T-cell (primary cell): ENCODE measurements at regions of chr1 and their contacts with region 1.

Region 1: GRCh38 chr1:160768295-160768657 is 27.7 kb upstream of the LY9 start:
- DNase-seq: peak; percentile 65 to 93 (median 85)
- ATAC-seq: peak; percentile 93 to 96 (median 94)
- H3K4me3 ChIP-seq: peak overlapping the region; percentile 39 to 45
- H3K4me3 Mint-ChIP-seq: peak overlapping the region; percentile 74 to 83 (median 75)
- H3K27ac ChIP-seq: peak overlapping the region; percentile 90
- H3K27ac Mint-ChIP-seq: peak overlapping the region; percentile 96 to 98
- H3K4me1 ChIP-seq: peaks cover 12 to 17% of the 10 kb centered on the region in 2 experiments
- H3K4me1 Mint-ChIP-seq: peaks cover 21% of the 10 kb centered on the region in 3 donors
- H3K27me3 ChIP-seq: no peaks in the 10 kb centered on the region
- H3K27me3 Mint-ChIP-seq: no peaks in the 10 kb centered on the region

Region 2: DNA sequence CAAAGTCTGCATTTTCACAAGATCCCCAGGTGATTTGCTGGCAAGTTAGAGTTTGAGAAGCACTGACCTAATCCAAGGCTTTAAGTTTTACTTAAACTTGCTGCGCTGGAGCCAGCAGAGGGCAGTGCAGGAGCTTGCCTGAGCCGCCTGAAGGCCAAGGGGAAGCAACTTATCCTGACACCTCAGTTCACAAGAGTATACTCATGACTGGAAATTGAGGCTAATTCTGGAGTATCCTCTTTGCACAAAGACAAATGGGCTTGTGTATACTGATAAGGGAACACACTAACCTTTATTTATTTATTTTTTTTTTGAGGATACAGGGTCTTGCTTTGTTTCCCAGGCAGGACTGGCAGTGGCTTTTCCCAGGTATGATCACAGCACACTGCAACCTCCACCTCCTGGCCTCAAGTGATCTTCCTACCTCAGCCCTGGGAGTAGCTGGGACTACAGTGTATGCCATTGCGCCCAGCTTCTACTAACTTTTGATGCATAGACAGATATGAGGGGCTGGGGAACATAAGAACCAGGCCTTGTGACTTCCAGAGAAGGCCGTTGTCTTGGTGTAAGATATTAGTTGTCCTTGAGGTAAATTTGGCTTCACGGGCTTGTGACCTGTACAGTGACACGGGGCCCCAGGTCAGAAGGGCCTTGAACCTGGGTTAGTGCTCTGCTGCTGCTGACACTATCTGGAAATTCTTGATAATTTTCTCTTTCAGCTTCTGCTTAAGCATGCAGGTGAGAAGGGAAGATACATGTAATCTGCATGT is 92.5 kb before region 1 on chr1:
- CTCF ChIA-PET with region 1: interaction called, 31 to 89 read pairs
- POLR2A ChIA-PET with region 1: no interaction called
- DNase-seq: peak; percentile 46 to 84 (median 69)
- ATAC-seq: peak; percentile 77 to 84 (median 80)
- H3K4me3 ChIP-seq: no peak overlapping the region
- H3K4me3 Mint-ChIP-seq: peak overlapping the region in 1 of 3 donors; percentile 1
- H3K27ac ChIP-seq: peak overlapping the region; percentile 58
- H3K27ac Mint-ChIP-seq: peak overlapping the region; percentile 78 to 85
- H3K4me1 ChIP-seq: peaks cover 24 to 33% of the 10 kb centered on the region in 2 experiments
- H3K4me1 Mint-ChIP-seq: peaks cover 9 to 18% (median 10%) of the 10 kb centered on the region in 3 donors
- H3K27me3 ChIP-seq: no peaks in the 10 kb centered on the region
- H3K27me3 Mint-ChIP-seq: no peaks in the 10 kb centered on the region

Region 3: DNA sequence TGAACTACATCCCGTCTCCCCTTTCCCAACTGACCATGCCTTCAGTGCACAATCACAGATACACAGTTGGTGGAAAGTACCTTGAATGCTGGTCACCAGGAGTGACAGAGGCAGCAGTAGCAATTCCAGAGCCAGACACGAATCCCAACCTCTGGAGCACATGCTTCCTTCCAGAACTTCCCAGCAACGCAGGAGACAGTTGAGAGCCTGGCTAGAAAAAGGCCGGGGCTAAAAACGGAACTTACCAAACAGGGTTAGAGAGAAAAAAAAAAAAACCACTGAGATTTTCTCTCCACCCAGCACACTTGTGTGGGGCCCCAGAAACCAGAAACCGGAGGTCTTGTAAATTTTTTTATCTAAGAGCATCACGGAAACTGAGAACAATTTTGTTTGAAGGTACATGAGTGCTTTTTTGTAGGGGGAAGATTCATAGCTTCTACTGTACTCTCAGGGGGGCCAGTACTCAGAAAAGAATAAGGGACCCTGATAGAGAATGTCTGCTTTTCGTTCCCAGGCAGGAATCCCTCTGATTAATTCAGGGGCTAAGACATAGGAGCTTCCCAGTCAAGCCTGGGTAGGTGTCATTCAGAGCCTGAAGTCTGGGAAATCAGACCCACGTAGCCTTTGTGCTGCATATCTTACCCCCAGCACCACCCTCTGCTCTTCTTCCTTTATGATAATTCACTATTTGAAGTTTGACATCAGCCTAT is 56.5 kb before region 1 on chr1 and contains the start of gene CD48:
- CTCF ChIA-PET with region 1: interaction called, 4 to 36 read pairs
- POLR2A ChIA-PET with region 1: interaction called in 1 of 2 experiments, 3 read pairs
- DNase-seq: peak in 34 of 35 experiments; percentile 24 to 79 (median 48)
- ATAC-seq: peak; percentile 54 to 77 (median 60)
- H3K4me3 ChIP-seq: peak within 1 kb of the TSS; percentile 78 to 94
- H3K4me3 Mint-ChIP-seq: no peak within 1 kb of the TSS
- H3K27ac ChIP-seq: peak within 1 kb of the TSS; percentile 95
- H3K27ac Mint-ChIP-seq: no peak within 1 kb of the TSS
- H3K4me1 ChIP-seq: peaks cover 50 to 51% of the 10 kb centered on the region in 2 experiments
- H3K4me1 Mint-ChIP-seq: peaks cover 39 to 50% (median 47%) of the 10 kb centered on the region in 3 donors
- H3K27me3 ChIP-seq: no peaks in the 10 kb centered on the region
- H3K27me3 Mint-ChIP-seq: no peaks in the 10 kb centered on the region
- total RNA-seq, gene CD48: 249 to 393 (median 273) TPM

Region 4: DNA sequence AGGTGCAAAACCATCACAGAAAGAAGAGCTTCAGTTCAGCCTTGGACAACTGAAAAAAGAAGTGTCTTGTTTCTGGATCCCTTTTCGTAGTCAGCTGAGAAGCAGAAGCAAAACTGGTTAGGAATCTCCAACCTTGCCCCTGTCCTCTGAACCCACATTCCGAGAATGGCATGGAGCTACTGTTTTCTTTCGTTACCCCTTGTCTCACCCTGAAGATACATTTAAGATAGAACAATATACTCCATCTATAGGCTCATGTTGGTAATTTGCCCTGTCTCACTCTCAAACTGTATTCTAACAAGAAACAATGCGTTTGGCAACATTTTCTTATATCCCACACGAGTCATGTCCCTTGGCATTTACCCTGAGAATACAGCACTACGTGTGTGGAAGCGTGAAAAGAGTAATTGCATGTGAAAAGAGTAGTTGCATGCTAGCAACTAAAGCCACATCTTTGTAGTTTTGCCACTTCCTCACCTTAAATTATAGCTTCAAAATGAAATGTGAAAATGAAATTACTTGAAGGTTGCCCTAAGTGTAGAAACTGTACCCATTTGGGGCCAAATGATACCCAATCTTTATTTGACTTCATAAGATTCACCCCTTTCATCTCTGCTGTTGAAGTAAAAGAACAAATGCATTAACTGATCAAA is 24.0 kb before region 1 on chr1:
- CTCF ChIA-PET with region 1: interaction called in 1 of 2 experiments, 15 read pairs
- POLR2A ChIA-PET with region 1: no interaction called
- DNase-seq: peak in 4 of 35 experiments; percentile 11 to 64 (median 24)
- ATAC-seq: peak; percentile 67 to 84 (median 80)
- H3K4me3 ChIP-seq: peak overlapping the region in 1 of 2 donors; percentile 40
- H3K4me3 Mint-ChIP-seq: peak overlapping the region; percentile 59 to 72 (median 59)
- H3K27ac ChIP-seq: peak overlapping the region; percentile 76
- H3K27ac Mint-ChIP-seq: peak overlapping the region; percentile 90 to 93
- H3K4me1 ChIP-seq: peaks cover 11 to 46% of the 10 kb centered on the region in 2 experiments
- H3K4me1 Mint-ChIP-seq: peaks cover 65 to 75% (median 73%) of the 10 kb centered on the region in 3 donors
- H3K27me3 ChIP-seq: no peaks in the 10 kb centered on the region
- H3K27me3 Mint-ChIP-seq: no peaks in the 10 kb centered on the region

Region 5: GRCh38 chr1:160795951-160796383 is 27.7 kb after region 1 on chr1 and contains the start of gene LY9:
- CTCF ChIA-PET with region 1: interaction called, 10 to 19 read pairs
- POLR2A ChIA-PET with region 1: no interaction called
- DNase-seq: peak; percentile 45 to 95 (median 84)
- ATAC-seq: peak; percentile 86 to 90 (median 87)
- H3K4me3 ChIP-seq: peak within 1 kb of the TSS; percentile 72 to 92
- H3K4me3 Mint-ChIP-seq: peak within 1 kb of the TSS; percentile 93 to 99 (median 98)
- H3K27ac ChIP-seq: peak within 1 kb of the TSS; percentile 93
- H3K27ac Mint-ChIP-seq: peak within 1 kb of the TSS; percentile 99
- H3K4me1 ChIP-seq: peaks cover 33 to 37% of the 10 kb centered on the region in 2 experiments
- H3K4me1 Mint-ChIP-seq: peaks cover 45 to 66% (median 61%) of the 10 kb centered on the region in 3 donors
- H3K27me3 ChIP-seq: no peaks in the 10 kb centered on the region
- H3K27me3 Mint-ChIP-seq: no peaks in the 10 kb centered on the region
- total RNA-seq, gene LY9: 95.4 to 127 (median 101) TPM

Region 6: DNA sequence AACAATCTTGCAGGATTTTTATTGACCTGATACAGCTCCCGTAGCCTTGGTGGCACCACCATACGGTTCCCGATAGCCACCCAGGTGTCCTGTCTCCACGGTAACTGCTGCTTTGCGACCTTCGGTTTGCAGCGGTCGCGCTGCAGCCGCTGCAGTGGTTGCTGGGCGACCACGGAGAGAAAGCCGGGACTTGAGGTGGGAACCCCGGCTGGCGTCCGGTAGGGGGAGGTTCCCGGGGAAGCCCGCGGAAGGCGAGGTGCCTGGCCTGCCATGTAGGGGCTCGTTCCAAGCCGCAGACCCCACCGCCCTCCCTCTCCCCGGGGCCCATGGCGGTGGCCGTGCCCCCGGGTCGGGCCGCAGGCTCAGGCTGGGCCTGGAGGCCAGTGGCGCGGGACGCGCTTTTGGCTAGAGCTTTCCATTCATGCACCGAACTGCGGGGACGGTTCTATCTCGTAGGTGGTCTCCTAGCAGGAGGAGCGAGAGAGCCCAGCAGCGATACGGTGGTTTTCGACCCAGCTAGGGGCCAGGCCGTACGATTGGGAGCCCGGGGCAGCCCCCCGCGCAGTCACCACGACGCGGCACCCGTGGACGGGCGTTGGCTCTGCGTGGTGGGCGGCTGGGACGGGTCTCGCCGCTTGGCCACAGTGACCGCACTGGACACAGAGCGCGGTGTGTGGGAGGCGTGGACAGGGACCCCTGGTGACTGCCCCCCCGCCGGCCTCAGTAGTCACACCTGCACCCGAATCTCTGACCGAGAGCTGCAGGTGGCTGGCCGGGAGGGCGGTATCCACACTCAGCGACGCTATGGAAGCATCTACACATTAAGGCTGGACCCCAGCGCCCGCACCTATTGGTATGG is 330.2 kb after region 1 on chr1 and contains the start of gene KLHDC9:
- CTCF ChIA-PET with region 1: interaction called in 1 of 2 experiments, 10 read pairs
- POLR2A ChIA-PET with region 1: no interaction called
- DNase-seq: peak; percentile 22 to 78 (median 48)
- ATAC-seq: peak; percentile 61 to 77 (median 68)
- H3K4me3 ChIP-seq: peak within 1 kb of the TSS; percentile 51 to 87
- H3K4me3 Mint-ChIP-seq: peak within 1 kb of the TSS; percentile 81 to 88 (median 86)
- H3K27ac ChIP-seq: peak within 1 kb of the TSS; percentile 75
- H3K27ac Mint-ChIP-seq: peak within 1 kb of the TSS; percentile 85 to 93
- H3K4me1 ChIP-seq: peaks cover 2 to 20% of the 10 kb centered on the region in 2 experiments
- H3K4me1 Mint-ChIP-seq: peaks cover 16 to 25% (median 24%) of the 10 kb centered on the region in 3 donors
- H3K27me3 ChIP-seq: no peaks in the 10 kb centered on the region
- H3K27me3 Mint-ChIP-seq: peaks cover 0 to 3% of the 10 kb centered on the region in 2 donors
- total RNA-seq, gene KLHDC9: 0.82 to 1.6 (median 0.86) TPM in 3 of 5 donors, not detected in the others

Region 7: DNA sequence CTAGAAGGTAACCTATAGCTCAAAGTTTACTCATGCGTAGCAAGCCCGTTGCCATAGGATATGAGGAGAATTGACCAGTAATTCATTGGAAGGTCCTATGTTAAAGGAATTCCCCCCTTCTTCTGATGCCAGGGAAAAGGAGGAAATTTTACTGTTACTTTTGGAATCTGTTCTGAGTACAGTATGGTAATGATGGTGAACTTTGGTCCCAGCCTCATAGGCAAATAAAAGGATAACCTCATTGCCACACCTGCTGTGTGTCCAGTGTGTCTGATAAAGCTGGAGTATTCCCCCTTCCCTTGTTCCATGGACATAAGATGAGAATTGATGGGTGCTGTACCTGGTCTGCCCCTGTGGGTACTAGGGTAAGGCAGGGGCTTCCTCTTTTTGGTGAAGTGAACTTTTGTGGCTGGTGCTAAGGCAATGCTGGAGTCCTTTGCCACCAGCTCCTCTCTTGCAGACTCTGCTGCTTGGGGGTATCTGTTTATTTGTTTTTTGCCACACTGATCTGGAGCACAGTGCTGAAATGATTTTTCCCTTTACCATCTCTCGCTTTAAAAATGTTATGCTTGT is 519.3 kb after region 1 on chr1:
- CTCF ChIA-PET with region 1: no interaction called
- POLR2A ChIA-PET with region 1: no interaction called
- DNase-seq: no peak
- ATAC-seq: no peak
- H3K4me3 ChIP-seq: no peak overlapping the region
- H3K4me3 Mint-ChIP-seq: no peak overlapping the region
- H3K27ac ChIP-seq: no peak overlapping the region
- H3K27ac Mint-ChIP-seq: no peak overlapping the region
- H3K4me1 ChIP-seq: no peaks in the 10 kb centered on the region
- H3K4me1 Mint-ChIP-seq: peaks cover 0 to 6% (median 0%) of the 10 kb centered on the region in 3 donors
- H3K27me3 ChIP-seq: peaks cover 0 to 3% of the 10 kb centered on the region in 2 experiments
- H3K27me3 Mint-ChIP-seq: peaks cover 0 to 8% of the 10 kb centered on the region in 2 donors